MCF 10A (cell line): ENCODE measurements at regions of chr1 and their contacts with region 1.

Region 1: DNA sequence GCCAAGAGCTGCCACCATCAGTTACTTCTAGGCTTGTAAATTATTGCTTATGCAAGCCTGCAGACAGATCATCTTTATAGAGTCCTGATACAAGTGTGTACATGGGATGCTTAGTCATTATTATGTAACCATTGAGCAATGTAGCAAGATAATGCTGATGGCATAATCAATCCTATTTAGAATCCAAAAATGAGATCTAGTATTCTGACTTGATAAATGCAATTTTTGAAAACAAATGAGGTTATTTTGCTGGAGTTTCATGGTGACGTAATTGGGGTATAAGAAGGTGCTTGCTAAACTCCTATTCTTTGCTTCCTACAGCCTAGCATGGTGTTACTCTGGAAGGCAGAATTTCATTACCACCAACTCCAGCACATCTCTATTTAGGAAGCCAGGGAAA is 801.7 kb upstream of the PRMT6 start:
- DNase-seq: peak; percentile 49
- H3K4me3 Mint-ChIP-seq: no peak overlapping the region
- H3K27ac Mint-ChIP-seq: no peak overlapping the region
- H3K4me1 Mint-ChIP-seq: no peaks in the 10 kb centered on the region
- H3K27me3 Mint-ChIP-seq: no peaks in the 10 kb centered on the region
- CTCF ChIP-seq: no peak

Region 2: DNA sequence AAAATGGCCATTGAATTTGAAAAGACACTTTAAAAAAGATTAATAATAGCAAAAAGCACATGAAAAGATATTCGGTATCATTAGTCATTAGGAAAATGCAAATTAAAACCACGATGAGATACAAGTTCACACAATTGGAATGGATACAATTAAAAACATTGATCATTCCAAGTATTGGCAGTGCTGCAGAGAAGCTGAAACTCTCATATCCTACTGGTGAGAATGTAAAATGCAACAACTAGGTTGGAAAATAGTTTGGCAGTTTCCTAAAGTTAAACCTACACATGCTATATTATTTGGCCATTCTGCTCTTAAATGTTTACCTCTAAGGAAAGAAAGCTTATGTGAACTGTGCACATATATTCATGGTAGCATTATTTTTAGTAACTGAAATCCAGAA is 37.0 kb before region 1 on chr1:
- CTCF ChIA-PET with region 1: no interaction called
- POLR2A ChIA-PET with region 1: no interaction called
- intact Hi-C with region 1: loop called (anchors 2 kb)
- DNase-seq: no peak
- H3K4me3 Mint-ChIP-seq: no peak overlapping the region
- H3K27ac Mint-ChIP-seq: no peak overlapping the region
- H3K4me1 Mint-ChIP-seq: no peaks in the 10 kb centered on the region
- H3K27me3 Mint-ChIP-seq: no peaks in the 10 kb centered on the region
- CTCF ChIP-seq: no peak